ENCODE measurements at regions of chr2 and their contacts with region 1.

Region 1: GRCh38 chr2:180006781-180007579 is at the start of gene CWC22:
- DNase-seq: peak; percentile 47 to 94
- H3K4me3 ChIP-seq: peak within 1 kb of the TSS; percentile 76 to 97
- H3K27ac ChIP-seq: peak within 1 kb of the TSS; percentile 87 to 95
- H3K4me1 ChIP-seq: peaks cover 3 to 8% of the 10 kb centered on the region in 2 donors
- H3K27me3 ChIP-seq: no peaks in the 10 kb centered on the region
- CTCF ChIP-seq: no peak
- total RNA-seq, gene CWC22: 18.5 TPM

Region 2: DNA sequence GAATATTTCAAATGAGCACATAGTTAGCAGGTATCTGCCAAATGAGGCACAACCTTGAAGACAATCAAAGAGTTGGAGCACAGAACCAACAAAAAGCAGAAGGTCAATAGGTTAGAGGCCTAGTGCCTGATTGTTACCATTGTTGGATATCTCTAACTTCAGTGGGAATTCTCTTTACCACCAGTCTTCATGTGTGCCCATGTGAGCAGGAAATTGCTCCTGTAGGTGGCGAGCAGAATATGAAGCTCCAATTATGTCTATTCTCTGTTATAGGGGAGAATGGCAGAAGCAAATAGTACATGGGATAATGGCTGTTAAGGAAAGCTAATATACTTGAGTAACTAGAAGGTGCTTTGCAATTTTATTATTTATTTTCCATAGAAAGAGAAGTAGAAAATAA is 130.7 kb before region 1 on chr2:
- intact Hi-C with region 1: no loop called
- DNase-seq: no peak
- H3K4me3 ChIP-seq: no peak overlapping the region
- H3K27ac ChIP-seq: no peak overlapping the region
- H3K4me1 ChIP-seq: no peaks in the 10 kb centered on the region
- H3K27me3 ChIP-seq: no peaks in the 10 kb centered on the region
- CTCF ChIP-seq: no peak

Region 3: GRCh38 chr2:179890666-179891065 is 116.3 kb before region 1 on chr2:
- intact Hi-C with region 1: no loop called
- DNase-seq: no peak
- H3K4me3 ChIP-seq: no peak overlapping the region
- H3K27ac ChIP-seq: no peak overlapping the region
- H3K4me1 ChIP-seq: no peaks in the 10 kb centered on the region
- H3K27me3 ChIP-seq: no peaks in the 10 kb centered on the region
- CTCF ChIP-seq: no peak

Region 4: DNA sequence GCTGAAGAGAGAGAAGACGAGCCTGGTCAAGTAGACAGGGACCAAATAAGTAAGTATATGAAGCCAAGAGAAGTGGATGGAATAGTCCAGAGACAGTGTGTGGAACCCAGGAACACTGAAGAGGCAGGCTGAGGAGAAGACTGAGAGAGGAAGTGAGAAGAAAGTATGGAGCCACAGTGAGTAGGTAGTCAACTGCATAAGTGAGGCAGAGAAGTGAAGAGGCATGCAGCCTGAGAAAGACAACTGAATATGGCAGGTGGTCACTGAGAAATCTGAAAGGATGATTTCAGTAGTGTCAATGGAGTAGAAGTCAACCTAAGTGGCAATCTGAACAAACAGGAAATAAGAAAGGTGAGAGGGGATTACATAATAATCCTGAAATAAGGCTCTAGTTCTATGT is 55.3 kb before region 1 on chr2:
- intact Hi-C with region 1: no loop called
- DNase-seq: no peak
- H3K4me3 ChIP-seq: no peak overlapping the region
- H3K27ac ChIP-seq: no peak overlapping the region
- H3K4me1 ChIP-seq: no peaks in the 10 kb centered on the region
- H3K27me3 ChIP-seq: no peaks in the 10 kb centered on the region
- CTCF ChIP-seq: no peak

Region 5: DNA sequence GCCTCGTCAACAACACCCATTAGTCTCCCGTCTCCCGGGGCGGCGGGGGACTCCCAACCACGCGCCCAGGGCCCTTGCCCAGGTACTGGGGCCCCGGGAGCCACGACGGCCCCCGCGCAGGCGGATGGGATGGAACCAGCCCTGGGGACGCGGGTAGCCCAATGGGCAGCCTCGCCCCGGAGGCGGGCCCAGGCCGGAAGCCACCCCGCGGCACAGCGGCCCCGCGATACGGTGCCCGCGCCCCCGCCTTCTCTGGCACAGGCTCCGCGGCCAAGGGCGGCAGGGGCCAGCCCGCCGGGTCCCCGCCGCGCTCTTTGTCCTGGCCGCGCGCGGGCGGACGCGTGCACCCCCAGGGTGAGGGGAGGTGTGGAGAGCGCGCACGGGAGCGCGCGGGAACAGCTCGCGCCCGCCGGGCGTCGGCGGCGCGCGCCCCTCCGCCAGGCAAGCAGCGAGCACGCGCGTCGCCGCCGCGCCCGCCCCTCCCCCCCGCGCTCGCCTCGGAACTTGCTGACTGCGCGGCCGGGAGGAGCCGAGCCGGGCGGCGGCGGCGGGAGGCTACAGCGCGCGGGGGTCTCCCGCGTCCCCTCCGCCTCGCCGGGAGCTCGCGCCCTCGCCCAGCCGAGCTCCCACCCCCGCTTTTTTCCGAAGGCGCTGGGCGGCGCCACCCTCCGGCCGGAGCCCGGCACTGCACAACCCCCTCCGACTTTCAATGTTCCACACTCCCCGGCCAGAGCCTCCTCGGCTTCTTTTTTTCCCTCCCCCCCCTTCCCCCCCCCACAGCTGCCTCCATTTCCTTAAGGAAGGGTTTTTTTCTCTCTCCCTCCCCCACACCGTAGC is 973.3 kb after region 1 on chr2 and contains the start of gene UBE2E3:
- intact Hi-C with region 1: loop called (anchors 10 kb)
- DNase-seq: peak; percentile 14 to 89
- H3K4me3 ChIP-seq: peak within 1 kb of the TSS; percentile 72 to 76
- H3K27ac ChIP-seq: peak within 1 kb of the TSS; percentile 94 to 95
- H3K4me1 ChIP-seq: peaks cover 0 to 32% of the 10 kb centered on the region in 2 donors
- H3K27me3 ChIP-seq: no peaks in the 10 kb centered on the region
- CTCF ChIP-seq: peak; percentile 69 to 81 (median 79)
- total RNA-seq, gene UBE2E3: 125 TPM

Measured in ascending aorta (tissue), 2 donors.